ENCODE measurements at regions of chr13 and their contacts with region 1.

Region 1: DNA sequence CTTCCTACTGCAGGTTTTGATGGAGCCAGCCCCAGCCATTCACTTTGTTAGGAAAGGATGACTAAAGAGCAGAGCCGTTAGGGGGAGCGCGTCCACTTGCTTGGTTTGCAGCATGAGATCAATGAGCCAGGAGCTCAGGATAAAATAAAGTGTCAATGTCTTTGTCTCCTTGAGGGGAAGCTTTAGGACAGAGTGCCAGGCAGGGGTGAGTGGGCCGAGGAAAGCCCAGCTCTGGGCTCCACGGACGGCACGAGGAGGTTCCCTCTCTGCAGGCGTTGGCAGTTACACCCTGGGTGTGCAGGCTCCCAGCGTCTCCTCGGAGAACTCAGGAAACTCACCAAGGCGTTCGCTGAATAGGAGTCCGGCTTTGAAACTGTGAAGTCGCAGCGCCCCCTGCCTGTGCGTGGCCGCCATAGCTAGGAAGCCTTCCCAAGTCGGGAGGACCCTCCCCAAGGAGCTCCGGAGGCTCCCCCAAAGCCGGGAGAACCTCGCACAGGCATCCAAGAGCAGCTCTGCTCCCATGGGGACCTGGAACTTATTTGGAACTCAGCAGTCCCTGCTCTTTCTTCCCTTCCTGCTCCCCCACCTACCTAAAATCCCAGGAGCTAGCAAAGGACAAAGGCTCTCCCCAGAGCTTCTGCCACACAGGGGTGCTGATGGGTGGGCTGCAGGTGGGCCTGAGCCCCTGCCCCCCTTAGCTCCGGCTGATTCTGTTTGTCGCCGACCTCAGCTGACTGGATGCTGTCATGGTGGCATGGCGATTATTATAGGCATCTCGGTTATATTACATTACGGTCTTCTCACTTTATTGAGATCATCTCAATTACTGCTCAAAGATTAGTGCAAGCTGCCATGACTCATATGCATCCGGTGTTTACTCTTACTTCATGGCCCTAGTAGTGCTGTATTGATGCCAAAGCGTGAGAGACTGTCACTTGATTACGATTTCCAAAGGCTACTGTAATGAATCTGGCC is 34.4 kb downstream of the GSX1 start:
- DNase-seq: peak; percentile 59
- H3K4me3 ChIP-seq: peak overlapping the region; percentile 49
- H3K27ac ChIP-seq: no peak overlapping the region
- H3K27me3 ChIP-seq: peaks cover 21% of the 10 kb centered on the region
- CTCF ChIP-seq: peak; percentile 88

Region 2: GRCh38 chr13:26946684-26947343 is 879.9 kb before region 1 on chr13:
- CTCF ChIA-PET with region 1: interaction called, 32 read pairs
- POLR2A ChIA-PET with region 1: no interaction called
- DNase-seq: peak; percentile 42
- H3K4me3 ChIP-seq: no peak overlapping the region
- H3K27ac ChIP-seq: no peak overlapping the region
- H3K27me3 ChIP-seq: peaks cover 6% of the 10 kb centered on the region
- CTCF ChIP-seq: peak; percentile 90

Region 3: DNA sequence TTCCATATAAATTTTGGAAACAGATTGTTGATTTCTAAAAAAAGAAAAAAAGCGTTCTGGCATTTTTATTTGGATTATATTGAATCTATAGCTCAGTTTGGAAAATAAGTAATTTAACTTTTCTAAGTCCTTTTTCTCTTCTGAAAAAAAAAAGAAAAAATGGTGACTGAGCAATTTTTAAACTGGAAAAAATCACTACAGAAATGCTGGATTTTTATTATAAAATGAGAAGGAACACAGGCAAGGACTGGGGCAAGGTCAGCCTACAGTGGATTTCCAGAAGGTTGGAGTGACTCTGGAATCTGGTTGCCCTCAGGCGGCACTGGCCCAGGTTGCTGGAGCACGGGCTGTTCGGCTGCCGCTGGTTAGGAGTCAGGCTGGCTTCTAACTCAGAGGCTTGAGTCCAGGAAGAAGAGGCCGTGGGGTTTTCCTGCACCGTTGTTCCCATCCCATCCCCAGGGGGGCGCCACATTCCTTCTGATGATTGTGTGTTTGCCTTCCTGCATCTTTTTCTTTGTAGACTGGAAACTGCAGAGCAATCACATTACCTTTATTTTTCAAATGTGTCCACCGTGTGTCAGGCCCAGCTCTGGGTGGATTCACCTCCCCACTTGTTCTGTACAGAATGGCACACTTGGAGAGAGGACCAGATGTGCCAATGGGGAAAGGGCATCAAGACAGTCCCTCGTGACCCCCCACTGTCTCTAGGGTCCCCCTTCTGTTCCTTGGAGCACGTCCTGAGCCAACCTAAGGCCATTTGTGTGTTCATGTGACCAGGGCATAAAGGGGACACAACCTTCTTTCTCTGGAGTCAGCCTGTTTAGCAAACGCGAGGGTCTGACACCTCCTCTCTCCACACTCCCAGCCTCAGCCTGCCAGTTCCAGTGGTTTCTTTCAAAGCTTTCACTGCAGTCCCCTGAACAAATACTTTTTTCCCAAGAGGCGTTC is 446.7 kb before region 1 on chr13:
- CTCF ChIA-PET with region 1: interaction called, 141 read pairs
- POLR2A ChIA-PET with region 1: no interaction called
- DNase-seq: no peak
- H3K4me3 ChIP-seq: no peak overlapping the region
- H3K27ac ChIP-seq: no peak overlapping the region
- H3K27me3 ChIP-seq: peaks cover 16% of the 10 kb centered on the region
- CTCF ChIP-seq: peak; percentile 55

Region 4: DNA sequence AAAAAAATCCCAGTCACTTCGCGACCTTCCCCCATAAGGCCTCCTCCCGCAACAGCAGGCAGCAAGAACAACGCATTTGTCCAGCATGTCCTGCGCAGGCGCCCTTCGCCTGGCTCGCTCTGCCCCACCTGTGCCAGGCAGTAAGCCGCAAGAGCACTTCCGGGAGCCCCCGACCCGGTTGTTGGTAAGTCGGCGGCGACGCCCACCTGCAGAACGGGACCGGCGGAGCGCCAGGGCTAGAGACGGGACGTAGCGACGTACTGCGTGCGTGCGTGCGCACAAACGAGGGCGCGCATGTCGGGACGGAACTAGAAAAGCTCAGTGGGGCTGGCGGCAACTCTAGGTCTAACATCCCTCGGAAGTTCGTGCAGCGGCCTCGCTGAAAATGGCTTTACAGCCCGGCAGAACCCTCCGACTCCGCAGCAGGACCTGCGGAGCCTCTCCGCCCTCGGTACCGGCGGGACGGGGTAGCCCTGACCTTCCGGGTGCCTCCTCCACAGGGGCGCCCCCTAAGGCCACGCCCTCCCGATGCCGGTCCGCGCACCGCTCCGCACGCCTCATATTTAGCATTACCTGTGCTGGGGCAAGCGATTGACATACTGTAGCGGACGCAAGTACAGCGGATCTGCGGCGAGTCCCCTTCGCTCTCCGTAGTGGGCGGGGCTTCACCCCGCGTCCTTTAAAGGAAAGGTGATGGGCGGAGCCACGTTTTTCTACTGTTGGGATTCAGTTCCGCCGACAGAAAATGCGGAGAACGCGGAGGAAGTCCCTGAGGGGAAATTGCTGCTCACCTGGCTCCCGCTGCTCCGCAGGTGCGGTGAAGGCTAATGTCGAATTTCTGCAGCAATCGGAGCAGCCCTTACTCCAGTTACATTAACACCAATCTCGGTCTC is 376.5 kb before region 1 on chr13 and contains the start of gene MTIF3:
- CTCF ChIA-PET with region 1: interaction called, 22 read pairs
- POLR2A ChIA-PET with region 1: no interaction called
- DNase-seq: peak; percentile 76
- H3K4me3 ChIP-seq: peak within 1 kb of the TSS; percentile 86
- H3K27ac ChIP-seq: peak within 1 kb of the TSS; percentile 95
- H3K27me3 ChIP-seq: peaks cover 7% of the 10 kb centered on the region
- CTCF ChIP-seq: peak; percentile 17; the same call in 1 of the 2 replicates
- polyA plus RNA-seq, gene MTIF3: 52.1 and 72.5 TPM in 2 replicates

Region 5: GRCh38 chr13:27573265-27573664 is 253.4 kb before region 1 on chr13:
- CTCF ChIA-PET with region 1: interaction called, 10 read pairs
- POLR2A ChIA-PET with region 1: no interaction called
- DNase-seq: peak; percentile 15
- H3K4me3 ChIP-seq: no peak overlapping the region
- H3K27ac ChIP-seq: peak overlapping the region; percentile 25
- H3K27me3 ChIP-seq: no peaks in the 10 kb centered on the region
- CTCF ChIP-seq: no peak

Region 6: GRCh38 chr13:27839809-27840467 is 13.3 kb after region 1 on chr13:
- CTCF ChIA-PET with region 1: interaction called, 71 read pairs
- POLR2A ChIA-PET with region 1: no interaction called
- DNase-seq: no peak
- H3K4me3 ChIP-seq: no peak overlapping the region
- H3K27ac ChIP-seq: no peak overlapping the region
- H3K27me3 ChIP-seq: no peaks in the 10 kb centered on the region
- CTCF ChIP-seq: no peak

Region 7: DNA sequence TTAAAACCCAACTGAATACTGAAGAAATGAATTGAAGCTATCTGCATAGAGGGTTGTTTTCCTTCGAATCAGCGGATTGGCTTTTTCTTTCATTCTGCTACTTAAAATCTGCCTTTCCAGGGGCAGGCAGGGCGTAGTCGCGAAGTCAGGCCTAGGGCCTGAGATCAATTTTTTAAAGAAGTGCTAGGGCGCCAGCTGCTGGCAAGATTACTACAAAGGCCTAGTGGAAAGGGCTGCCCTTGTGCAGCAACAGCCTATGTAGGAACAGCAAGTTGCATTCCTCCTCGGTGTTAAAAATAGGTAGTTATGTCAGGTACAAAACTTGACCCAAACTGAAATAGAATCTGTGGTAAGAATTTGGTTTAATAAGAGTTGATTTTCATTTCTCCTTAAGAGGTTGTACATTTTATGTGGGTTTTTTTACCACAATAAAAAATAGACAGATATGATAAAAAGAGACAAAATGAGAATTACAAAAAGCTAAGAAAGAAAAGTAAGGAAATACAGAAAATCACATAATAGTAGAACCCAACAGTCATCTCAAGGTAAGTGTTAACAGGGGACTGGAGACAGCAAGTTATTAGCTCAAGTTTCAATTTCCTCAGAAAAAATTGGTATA is 171.3 kb after region 1 on chr13:
- CTCF ChIA-PET with region 1: interaction called, 21 read pairs
- POLR2A ChIA-PET with region 1: no interaction called
- DNase-seq: no peak
- H3K4me3 ChIP-seq: no peak overlapping the region
- H3K27ac ChIP-seq: no peak overlapping the region
- H3K27me3 ChIP-seq: peaks cover 3% of the 10 kb centered on the region
- CTCF ChIP-seq: peak; percentile 64